Activated CD4-positive, alpha-beta memory T cell treated with anti-CD3 and anti-CD28 coated beads for 36 hours (primary cell): ENCODE measurements at regions of chr2 and their contacts with region 1.

Region 1: DNA sequence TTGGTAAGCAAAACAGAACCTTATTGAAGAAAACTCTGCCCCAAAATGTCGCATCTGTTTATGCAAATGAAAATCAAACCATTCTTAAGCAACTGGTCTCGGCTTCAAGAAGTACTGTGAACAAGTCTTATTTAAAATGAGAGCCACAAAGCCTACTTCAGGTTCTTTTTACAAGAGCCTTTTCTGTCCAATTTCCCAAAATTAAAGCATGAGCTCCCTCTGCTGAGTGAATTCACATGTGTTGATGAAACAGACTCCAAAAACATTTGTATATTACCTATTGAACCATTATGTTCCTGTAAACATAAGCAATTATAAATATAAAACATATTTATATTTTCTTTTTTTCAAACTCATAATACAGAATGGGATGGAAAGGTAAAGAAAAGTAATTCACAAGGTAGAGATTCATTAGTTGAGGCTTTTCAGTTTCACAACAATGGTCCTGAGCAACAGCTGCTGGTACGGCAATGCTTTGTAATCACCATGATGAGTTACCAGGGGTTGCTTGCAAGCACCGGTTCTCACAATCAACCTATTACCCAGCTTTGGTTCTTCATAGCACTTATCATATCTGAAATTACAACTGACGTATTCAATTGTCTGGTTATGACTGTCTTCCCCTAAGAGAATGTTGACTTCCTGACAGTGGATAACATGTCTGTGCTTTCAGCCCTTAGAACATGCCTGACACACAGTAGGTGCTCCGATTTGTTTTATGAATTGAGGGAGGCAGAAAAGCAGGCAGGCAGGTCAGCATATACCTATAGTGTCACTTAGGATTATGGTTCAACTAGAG is 108.4 kb upstream of the BZW1 start:
- DNase-seq: peak; percentile 71
- H3K4me3 Mint-ChIP-seq: peak overlapping the region; percentile 27
- H3K27ac Mint-ChIP-seq: peak overlapping the region; percentile 81
- H3K4me1 Mint-ChIP-seq: peaks cover 72% of the 10 kb centered on the region
- H3K27me3 Mint-ChIP-seq: peaks cover 6% of the 10 kb centered on the region

Region 2: DNA sequence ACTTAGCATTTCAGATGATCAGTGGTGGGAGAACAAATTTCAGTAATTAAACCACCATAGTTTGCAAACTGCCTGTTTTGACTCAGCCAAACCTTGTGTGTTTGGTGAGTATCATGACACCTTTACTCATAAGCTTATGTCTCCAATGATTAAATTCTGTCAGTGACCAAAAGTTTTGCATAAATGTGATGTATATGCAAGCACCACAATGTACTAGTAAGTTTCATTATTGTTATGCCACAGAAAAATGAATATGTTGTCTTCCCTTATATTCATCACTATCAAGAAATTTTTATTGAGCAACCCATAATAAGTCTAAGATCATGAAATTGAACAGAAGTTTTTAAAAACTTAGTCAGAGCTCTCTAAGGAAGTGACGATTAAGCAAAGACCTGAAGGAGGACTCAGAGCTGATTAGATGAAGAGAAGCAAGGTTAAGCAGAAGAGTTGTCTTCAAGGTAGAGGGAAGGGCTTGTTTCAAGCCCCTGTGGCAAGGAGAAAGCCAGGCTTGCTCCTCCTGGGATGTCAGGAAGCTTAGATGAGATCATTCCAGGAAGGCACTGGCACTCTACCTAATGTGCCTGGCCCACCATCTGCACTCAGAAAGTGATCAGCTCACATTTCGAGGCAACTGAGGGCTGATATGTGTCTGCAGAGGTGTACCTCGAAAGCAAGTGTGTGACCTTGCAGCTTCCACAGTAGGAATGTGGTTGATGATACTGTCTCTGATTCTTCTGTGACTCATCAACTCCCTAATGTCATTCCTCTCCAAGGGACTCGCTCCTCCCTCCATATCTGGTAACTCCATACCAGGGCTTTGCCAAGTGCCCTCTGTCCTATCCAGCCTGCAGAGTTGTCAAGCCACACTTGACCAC is 248.2 kb before region 1 on chr2:
- CTCF ChIA-PET with region 1: no interaction called
- POLR2A ChIA-PET with region 1: no interaction called
- intact Hi-C with region 1: loop called (anchors 1 kb)
- DNase-seq: peak; percentile 43
- H3K4me3 Mint-ChIP-seq: no peak overlapping the region
- H3K27ac Mint-ChIP-seq: peak overlapping the region; percentile 91
- H3K4me1 Mint-ChIP-seq: peaks cover 32% of the 10 kb centered on the region
- H3K27me3 Mint-ChIP-seq: no peaks in the 10 kb centered on the region

Region 3: GRCh38 chr2:200578778-200579177 is 124.5 kb before region 1 on chr2:
- CTCF ChIA-PET with region 1: interaction called, 7 read pairs
- POLR2A ChIA-PET with region 1: no interaction called
- intact Hi-C with region 1: loop called (anchors 1 kb)
- DNase-seq: no peak
- H3K4me3 Mint-ChIP-seq: no peak overlapping the region
- H3K27ac Mint-ChIP-seq: no peak overlapping the region
- H3K4me1 Mint-ChIP-seq: peaks cover 12% of the 10 kb centered on the region
- H3K27me3 Mint-ChIP-seq: no peaks in the 10 kb centered on the region

Region 4: GRCh38 chr2:200765139-200765951 is 62.0 kb after region 1 on chr2:
- CTCF ChIA-PET with region 1: interaction called, 14 read pairs
- POLR2A ChIA-PET with region 1: interaction called, 12 read pairs
- intact Hi-C with region 1: loop called (anchors 1 kb)
- DNase-seq: peak; percentile 75
- H3K4me3 Mint-ChIP-seq: peak overlapping the region; percentile 42
- H3K27ac Mint-ChIP-seq: peak overlapping the region; percentile 96
- H3K4me1 Mint-ChIP-seq: peaks cover 32% of the 10 kb centered on the region
- H3K27me3 Mint-ChIP-seq: no peaks in the 10 kb centered on the region

Region 5: GRCh38 chr2:200963124-200963917 is 260.0 kb after region 1 on chr2 and contains the start of gene ORC2:
- CTCF ChIA-PET with region 1: no interaction called
- POLR2A ChIA-PET with region 1: no interaction called
- intact Hi-C with region 1: loop called (anchors 10 kb)
- DNase-seq: peak; percentile 95
- H3K4me3 Mint-ChIP-seq: peak within 1 kb of the TSS; percentile 89
- H3K27ac Mint-ChIP-seq: peak within 1 kb of the TSS; percentile 93
- H3K4me1 Mint-ChIP-seq: peaks cover 60% of the 10 kb centered on the region
- H3K27me3 Mint-ChIP-seq: no peaks in the 10 kb centered on the region
- total RNA-seq, gene ORC2: 53.0 to 65.1 TPM

Region 6: DNA sequence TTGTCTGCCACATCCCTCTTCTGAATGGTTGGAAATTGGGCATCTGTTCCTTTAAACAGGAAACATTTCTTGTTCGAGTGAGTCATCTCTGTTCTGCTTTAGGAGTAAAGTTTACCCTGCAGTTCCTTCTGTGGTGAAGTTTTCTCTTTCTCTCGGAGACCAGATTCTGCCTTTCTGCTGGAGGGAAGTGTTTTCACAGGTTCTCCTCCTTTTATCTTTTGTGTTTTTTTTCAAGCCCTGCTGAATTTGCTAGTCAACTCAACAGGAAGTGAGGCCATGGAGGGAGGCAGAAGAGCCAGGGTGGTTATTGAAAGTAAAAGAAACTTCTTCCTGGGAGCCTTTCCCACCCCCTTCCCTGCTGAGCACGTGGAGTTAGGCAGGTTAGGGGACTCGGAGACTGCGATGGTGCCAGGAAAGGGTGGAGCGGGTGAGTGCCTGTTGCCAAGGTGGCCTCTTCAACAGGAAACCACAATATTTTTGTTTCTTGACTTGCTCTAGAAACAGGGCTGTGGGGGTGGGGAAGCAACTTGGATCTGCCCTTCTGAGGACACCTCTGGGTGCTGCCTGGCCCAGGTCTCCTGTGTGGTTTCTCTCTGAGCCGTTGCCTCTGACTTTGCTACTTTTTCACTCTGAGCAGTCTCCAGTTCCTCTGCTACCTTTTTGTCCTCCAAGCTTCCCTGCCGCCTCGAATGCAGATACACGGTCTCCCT is 554.8 kb after region 1 on chr2:
- CTCF ChIA-PET with region 1: no interaction called
- POLR2A ChIA-PET with region 1: no interaction called
- intact Hi-C with region 1: loop called (anchors 10 kb)
- DNase-seq: peak; percentile 96
- H3K4me3 Mint-ChIP-seq: peak overlapping the region; percentile 85
- H3K27ac Mint-ChIP-seq: peak overlapping the region; percentile 98
- H3K4me1 Mint-ChIP-seq: peaks cover 66% of the 10 kb centered on the region
- H3K27me3 Mint-ChIP-seq: no peaks in the 10 kb centered on the region